ENCODE measurements at regions of chr12 and their contacts with region 1.

Region 1: GRCh38 chr12:68675101-68675842 is 11.5 kb upstream of the NUP107 start:
- DNase-seq: peak; percentile 58 to 91 (median 76)
- ATAC-seq: peak; percentile 96 to 99
- H3K4me3 Mint-ChIP-seq: peak overlapping the region; percentile 43 to 85 (median 75)
- H3K27ac Mint-ChIP-seq: peak overlapping the region; percentile 0 to 98 (median 94)
- H3K4me1 Mint-ChIP-seq: peaks cover 25 to 62% (median 60%) of the 10 kb centered on the region in 4 donors
- H3K27me3 Mint-ChIP-seq: no peaks in the 10 kb centered on the region

Region 2: DNA sequence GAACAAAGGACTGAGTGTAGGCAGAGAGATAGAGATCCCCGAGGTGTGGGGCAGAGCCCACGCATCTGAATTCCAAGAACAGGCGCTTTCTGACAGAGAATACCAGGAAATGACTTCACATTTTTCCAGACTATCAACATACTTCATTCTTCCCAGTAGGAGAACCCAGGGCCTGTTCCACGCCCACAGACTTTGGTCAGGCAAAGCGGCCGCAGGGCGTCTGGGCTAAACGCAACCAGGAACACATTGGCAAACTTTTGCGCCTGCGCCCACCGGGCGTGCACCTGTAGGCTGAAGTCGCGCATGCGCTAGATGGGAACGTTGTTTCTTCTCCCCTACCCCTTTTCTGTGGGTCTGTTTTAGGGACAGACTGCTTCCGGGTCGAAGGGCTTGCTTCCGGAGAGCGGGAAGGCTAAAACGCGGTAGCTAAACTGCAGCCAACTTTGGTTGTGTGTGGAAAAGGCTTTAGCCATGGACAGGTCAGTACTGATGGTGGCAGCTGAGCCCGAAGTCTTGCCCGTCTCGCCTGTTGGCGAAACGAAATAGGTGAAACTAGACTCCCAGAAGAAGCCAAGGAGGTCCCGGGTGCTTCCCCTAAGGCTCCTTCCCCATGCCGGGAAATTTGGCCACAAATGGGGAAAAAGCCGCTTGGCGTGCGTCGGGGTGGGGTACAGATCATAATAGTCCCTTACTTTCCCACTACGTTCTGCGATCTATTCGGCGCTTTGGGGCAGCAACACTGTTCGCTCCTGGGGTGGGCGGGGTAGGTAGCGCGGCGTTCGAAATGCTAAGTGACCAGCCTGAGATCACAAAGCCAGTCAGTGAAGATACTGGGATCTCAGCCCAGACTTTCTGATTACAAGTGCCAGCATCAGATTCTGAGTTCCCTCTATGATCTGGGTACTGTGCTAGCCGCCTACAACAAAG is 11.6 kb after region 1 on chr12 and contains the start of gene NUP107:
- POLR2A ChIA-PET with region 1: interaction called, 25 read pairs
- DNase-seq: peak; percentile 94 to 99 (median 96)
- ATAC-seq: peak; percentile 93 to 94
- H3K4me3 Mint-ChIP-seq: peak within 1 kb of the TSS; percentile 93 to 99 (median 98)
- H3K27ac Mint-ChIP-seq: peak within 1 kb of the TSS; percentile 98 to 100 (median 99)
- H3K4me1 Mint-ChIP-seq: peaks cover 9 to 55% (median 43%) of the 10 kb centered on the region in 4 donors
- H3K27me3 Mint-ChIP-seq: no peaks in the 10 kb centered on the region
- polyA plus RNA-seq, gene NUP107: 21.3 to 39.0 (median 24.6) TPM

Measured in naive thymus-derived CD8-positive, alpha-beta T cell (primary cell).